Heart right ventricle (tissue), 16 donors: ENCODE measurements at regions of chr20 and their contacts with region 1.

Region 1: GRCh38 chr20:10553326-10553984 is 118.3 kb downstream of the SLX4IP start:
- DNase-seq: peak; percentile 55 to 77
- ATAC-seq: peak in 7 of 8 donors; percentile 45 to 79 (median 73)
- H3K4me3 ChIP-seq: no peak overlapping the region
- H3K27ac ChIP-seq: no peak overlapping the region
- H3K4me1 ChIP-seq: peaks cover 0 to 38% (median 14%) of the 10 kb centered on the region in 9 donors
- H3K27me3 ChIP-seq: no peaks in the 10 kb centered on the region
- CTCF ChIP-seq: peak; percentile 65 to 90 (median 82)

Region 2: DNA sequence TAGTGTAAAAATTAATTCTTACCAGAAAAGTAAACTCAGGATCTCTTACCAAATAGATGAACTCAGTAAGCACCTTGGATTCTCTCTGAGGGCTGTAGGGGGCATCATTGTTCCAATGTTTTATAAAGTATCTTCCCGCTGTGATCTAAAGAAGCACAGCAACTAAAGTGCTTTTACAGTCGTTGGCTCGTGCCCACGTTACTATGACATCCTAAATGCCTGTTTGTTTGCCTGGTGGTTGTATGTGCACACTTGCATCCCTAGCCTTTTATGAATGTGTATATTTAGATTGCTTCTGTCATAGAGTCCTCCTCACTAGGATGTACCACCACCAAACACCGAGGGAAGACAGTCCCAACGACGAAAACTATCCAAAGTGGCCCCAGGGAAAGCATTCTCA is 83.9 kb before region 1 on chr20:
- intact Hi-C with region 1: loop called in 1 of 10 experiments (anchors 5 kb)
- DNase-seq: peak in 1 of 2 donors; percentile 61
- ATAC-seq: peak in 7 of 8 donors; percentile 44 to 81 (median 75)
- H3K4me3 ChIP-seq: no peak overlapping the region
- H3K27ac ChIP-seq: peak overlapping the region in 2 of 10 donors; percentile 3 to 29
- H3K4me1 ChIP-seq: peaks cover 0 to 60% (median 51%) of the 10 kb centered on the region in 9 donors
- H3K27me3 ChIP-seq: no peaks in the 10 kb centered on the region
- CTCF ChIP-seq: peak; percentile 38 to 80 (median 69)

Region 3: GRCh38 chr20:10603971-10604864 is 50.8 kb after region 1 on chr20:
- intact Hi-C with region 1: no loop called
- DNase-seq: peak; percentile 32 to 40
- ATAC-seq: peak; percentile 79 to 94 (median 88)
- H3K4me3 ChIP-seq: no peak overlapping the region
- H3K27ac ChIP-seq: peak overlapping the region; percentile 39 to 81 (median 66)
- H3K4me1 ChIP-seq: peaks cover 0 to 37% (median 13%) of the 10 kb centered on the region in 9 donors
- H3K27me3 ChIP-seq: no peaks in the 10 kb centered on the region
- CTCF ChIP-seq: no peak

Region 4: GRCh38 chr20:10667077-10667401 is 113.6 kb after region 1 on chr20:
- intact Hi-C with region 1: loop called in 8 of 10 experiments (anchors 5 to 10 kb)
- DNase-seq: peak; percentile 39 to 60
- ATAC-seq: peak in 4 of 8 donors; percentile 1 to 15 (median 8)
- H3K4me3 ChIP-seq: peak overlapping the region in 8 of 10 donors; percentile 14 to 98 (median 82)
- H3K27ac ChIP-seq: peak overlapping the region; percentile 5 to 82 (median 62)
- H3K4me1 ChIP-seq: peaks cover 14 to 88% (median 65%) of the 10 kb centered on the region in 9 donors
- H3K27me3 ChIP-seq: no peaks in the 10 kb centered on the region
- CTCF ChIP-seq: no peak

Region 5: DNA sequence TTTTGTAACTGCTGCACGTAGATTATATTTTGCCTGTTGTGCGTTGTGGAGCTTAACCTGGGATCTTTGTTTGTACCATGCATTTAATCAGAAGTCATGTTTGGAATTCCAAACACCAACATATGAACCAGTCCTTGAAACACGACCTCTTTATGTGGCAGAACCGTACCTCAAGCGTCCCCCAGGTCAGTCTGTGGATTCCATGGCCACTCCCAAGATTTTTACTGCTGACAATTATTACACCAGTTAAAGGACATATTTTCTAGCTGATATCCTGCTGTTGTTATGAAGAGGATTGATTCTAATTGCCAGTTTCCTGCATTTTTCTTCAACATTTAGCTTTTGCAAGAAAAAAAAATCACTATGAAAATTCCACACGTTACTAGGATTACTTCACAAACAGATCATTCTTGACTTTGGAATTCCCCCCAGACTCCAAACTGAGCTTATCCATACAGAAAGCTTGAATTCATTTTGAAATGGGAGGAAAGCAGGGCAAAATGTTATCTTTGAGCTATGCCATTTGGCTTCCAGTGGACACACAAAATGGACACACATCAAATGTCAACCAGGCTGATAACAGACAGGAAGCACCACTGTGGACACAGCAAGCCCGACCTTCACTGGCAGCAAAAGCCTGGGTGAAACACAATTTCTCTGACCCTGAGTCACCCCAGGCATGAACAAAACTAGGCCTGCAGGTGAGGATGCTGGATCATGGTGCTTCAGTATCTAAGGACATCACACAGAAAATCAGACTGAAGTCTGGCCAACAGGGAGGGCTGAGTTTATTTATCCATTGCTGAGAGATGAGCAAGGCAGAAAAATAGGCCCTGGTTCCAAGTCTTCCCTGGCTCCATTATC is 663.2 kb after region 1 on chr20:
- intact Hi-C with region 1: loop called in 2 of 10 experiments (anchors 10 kb)
- DNase-seq: no peak
- ATAC-seq: peak in 5 of 8 donors; percentile 21 to 46 (median 31)
- H3K4me3 ChIP-seq: no peak overlapping the region
- H3K27ac ChIP-seq: peak overlapping the region in 5 of 10 donors; percentile 5 to 54 (median 36)
- H3K4me1 ChIP-seq: peaks cover 5 to 25% (median 22%) of the 10 kb centered on the region in 9 donors
- H3K27me3 ChIP-seq: no peaks in the 10 kb centered on the region
- CTCF ChIP-seq: no peak

Region 6: GRCh38 chr20:11549172-11550103 is 996.0 kb after region 1 on chr20:
- intact Hi-C with region 1: loop called in 9 of 10 experiments (anchors 2 to 10 kb)
- DNase-seq: no peak
- ATAC-seq: no peak
- H3K4me3 ChIP-seq: no peak overlapping the region
- H3K27ac ChIP-seq: no peak overlapping the region
- H3K4me1 ChIP-seq: peaks cover 0 to under 1% (median 0%) of the 10 kb centered on the region in 9 donors
- H3K27me3 ChIP-seq: peaks cover 0 to 6% (median 0%) of the 10 kb centered on the region in 7 donors
- CTCF ChIP-seq: no peak